Mammary epithelial cell (primary cell): ENCODE measurements at regions of chr12 and their contacts with region 1.

Region 1: GRCh38 chr12:26097046-26097878 is 27.6 kb downstream of the BHLHE41 start:
- DNase-seq: peak; percentile 72
- H3K4me3 ChIP-seq: no peak overlapping the region
- H3K27ac ChIP-seq: peak overlapping the region; percentile 44
- H3K4me1 ChIP-seq: peaks cover 14% of the 10 kb centered on the region
- H3K27me3 ChIP-seq: no peaks in the 10 kb centered on the region
- CTCF ChIP-seq: peak; percentile 95 to 96

Region 2: DNA sequence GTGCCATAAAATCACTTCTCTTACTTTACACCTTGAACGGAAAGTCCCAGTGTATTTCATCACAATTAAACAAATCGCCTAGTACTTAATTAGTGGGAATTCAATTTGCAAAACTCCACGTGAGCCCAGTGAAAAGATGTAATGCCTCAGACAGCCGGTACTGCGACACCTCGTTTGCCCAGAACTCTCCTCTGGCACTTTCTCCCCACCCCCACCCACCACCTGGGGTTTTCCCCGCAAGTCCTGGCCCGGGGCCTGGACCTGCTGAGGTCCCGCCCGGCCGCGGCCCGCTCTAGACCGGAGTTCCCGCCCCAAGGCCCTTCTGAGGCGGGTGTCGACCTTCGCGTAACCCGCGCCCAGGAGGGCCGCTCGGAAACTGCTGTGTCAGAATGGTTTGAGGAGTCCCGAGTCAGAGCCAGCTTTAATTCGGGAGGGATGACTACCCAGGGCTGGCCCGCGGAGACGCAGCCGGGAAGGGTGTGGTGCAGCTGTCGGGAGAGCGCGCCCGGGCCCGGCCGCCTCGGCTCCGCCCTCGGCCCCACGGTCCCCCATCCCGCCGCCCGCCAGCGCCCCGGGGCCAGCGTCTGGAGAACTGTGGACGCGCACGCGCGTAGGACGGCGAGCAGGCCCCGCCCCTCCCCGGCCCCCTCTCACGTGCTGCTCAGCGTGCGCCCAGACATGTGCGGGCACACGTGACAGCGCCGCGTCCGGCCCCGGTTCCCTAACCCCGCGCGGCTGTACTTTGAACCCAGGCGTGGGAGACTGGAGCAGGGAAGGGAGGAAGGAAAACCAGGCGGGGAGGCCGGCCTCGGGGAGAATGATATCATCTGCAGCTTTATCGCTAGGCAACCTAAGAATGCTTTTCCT is 16.8 kb after region 1 on chr12:
- CTCF ChIA-PET with region 1: interaction called, 4 read pairs
- dilution Hi-C with region 1: no loop called
- in situ Hi-C with region 1: no loop called
- intact Hi-C with region 1: loop called (anchors 1 kb)
- DNase-seq: peak; percentile 93
- H3K4me3 ChIP-seq: peak overlapping the region; percentile 24 to 54 (median 36)
- H3K27ac ChIP-seq: peak overlapping the region; percentile 81
- H3K4me1 ChIP-seq: peaks cover 29% of the 10 kb centered on the region
- H3K27me3 ChIP-seq: no peaks in the 10 kb centered on the region
- CTCF ChIP-seq: peak; percentile 24 to 56

Region 3: GRCh38 chr12:26309646-26310045 is 212.4 kb after region 1 on chr12:
- CTCF ChIA-PET with region 1: no interaction called
- dilution Hi-C with region 1: no loop called
- in situ Hi-C with region 1: no loop called
- intact Hi-C with region 1: loop called (anchors 1 kb)
- DNase-seq: no peak
- H3K4me3 ChIP-seq: no peak overlapping the region
- H3K27ac ChIP-seq: no peak overlapping the region
- H3K4me1 ChIP-seq: no peaks in the 10 kb centered on the region
- H3K27me3 ChIP-seq: no peaks in the 10 kb centered on the region
- CTCF ChIP-seq: peak in 1 of 2 donors; percentile 10

Region 4: GRCh38 chr12:26434299-26435068 is 337.2 kb after region 1 on chr12:
- CTCF ChIA-PET with region 1: no interaction called
- dilution Hi-C with region 1: no loop called
- in situ Hi-C with region 1: no loop called
- intact Hi-C with region 1: loop called (anchors 1 kb)
- DNase-seq: peak; percentile 60
- H3K4me3 ChIP-seq: no peak overlapping the region
- H3K27ac ChIP-seq: no peak overlapping the region
- H3K4me1 ChIP-seq: no peaks in the 10 kb centered on the region
- H3K27me3 ChIP-seq: no peaks in the 10 kb centered on the region
- CTCF ChIP-seq: peak; percentile 89 to 98

Region 5: DNA sequence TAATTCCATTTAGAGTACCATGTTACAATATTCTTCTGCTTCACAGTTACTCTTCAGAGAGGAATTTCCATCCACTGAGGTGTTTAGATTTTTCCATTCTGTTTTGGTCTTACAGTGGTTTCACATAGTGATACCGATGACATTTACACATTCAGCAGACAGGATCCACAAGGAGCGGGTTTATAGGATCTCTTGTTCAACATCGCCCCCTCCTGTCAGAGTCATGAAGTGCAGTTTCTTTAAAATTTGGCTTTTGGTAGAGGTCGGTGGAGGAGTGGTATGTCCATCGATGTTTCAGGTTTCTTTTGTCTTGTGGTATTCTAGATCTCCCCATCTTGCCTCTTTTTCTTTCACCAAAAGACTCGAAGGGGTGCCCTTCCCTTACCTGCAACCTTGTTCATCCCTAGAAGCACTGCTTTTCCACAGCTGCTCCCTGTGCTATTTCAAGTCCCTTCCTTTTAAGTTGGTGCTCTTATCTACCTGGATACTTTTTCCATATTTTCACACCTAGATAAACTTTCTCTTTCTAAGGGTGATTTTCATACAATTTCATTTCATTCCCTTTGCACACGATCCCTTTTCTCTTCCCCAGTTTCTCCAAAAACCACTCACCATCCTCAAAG is 554.4 kb after region 1 on chr12:
- CTCF ChIA-PET with region 1: no interaction called
- dilution Hi-C with region 1: no loop called
- in situ Hi-C with region 1: loop called in 1 of 2 experiments (anchors 25 kb)
- intact Hi-C with region 1: loop called (anchors 1 kb)
- DNase-seq: peak; percentile 67
- H3K4me3 ChIP-seq: no peak overlapping the region
- H3K27ac ChIP-seq: no peak overlapping the region
- H3K4me1 ChIP-seq: peaks cover 14% of the 10 kb centered on the region
- H3K27me3 ChIP-seq: no peaks in the 10 kb centered on the region
- CTCF ChIP-seq: peak; percentile 72 to 84